Calu3 (cell line): ENCODE measurements at regions of chr14 and their contacts with region 1.

Region 1: DNA sequence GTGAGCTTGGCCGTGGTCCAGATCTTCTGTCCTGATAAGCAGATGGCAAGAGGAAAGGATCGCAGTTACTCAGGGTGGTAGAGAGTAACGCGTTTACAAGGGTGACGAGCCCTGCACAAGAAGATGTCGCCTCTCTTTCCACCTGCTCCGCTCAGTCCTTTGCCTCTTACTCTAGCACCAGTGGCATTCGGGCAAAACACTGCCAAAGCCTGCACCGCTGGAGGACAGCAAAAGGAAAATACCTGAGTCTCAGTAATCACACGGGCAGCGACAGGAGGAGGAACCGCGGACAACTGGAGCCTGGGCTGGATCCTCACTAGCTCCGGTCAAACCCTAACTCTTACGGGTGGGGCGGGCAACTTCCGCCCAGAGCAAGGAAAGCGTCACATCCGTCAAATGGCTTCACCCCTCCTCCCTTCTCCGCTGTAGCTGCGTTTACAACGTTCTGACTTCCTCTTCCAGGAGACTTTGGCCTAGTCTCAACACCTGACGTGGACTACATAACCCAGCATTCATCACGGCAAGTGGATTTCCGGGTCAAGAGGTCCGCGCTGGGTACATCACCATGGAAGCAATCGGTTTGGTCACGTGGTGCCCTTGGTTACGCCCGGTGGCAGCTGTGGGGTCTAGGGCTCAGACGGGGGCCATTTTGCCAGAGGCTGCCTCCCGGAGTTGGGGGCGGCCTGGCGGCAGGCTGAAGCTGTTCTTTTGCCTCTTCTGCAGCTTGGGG is at the starts of genes KLHL28 and TOGARAM1:
- DNase-seq: peak; percentile 95
- H3K4me3 Mint-ChIP-seq: no peak within 1 kb of the TSS
- H3K27ac Mint-ChIP-seq: no peak within 1 kb of the TSS
- H3K4me1 Mint-ChIP-seq: peaks cover 16% of the 10 kb centered on the region
- H3K27me3 Mint-ChIP-seq: no peaks in the 10 kb centered on the region
- CTCF ChIP-seq: no peak
- total RNA-seq, gene KLHL28: 10.1 and 10.7 TPM in 2 replicates
- total RNA-seq, gene TOGARAM1: 15.1 TPM in 2 replicates

Region 2: GRCh38 chr14:44609876-44610510 is 351.8 kb before region 1 on chr14:
- CTCF ChIA-PET with region 1: no interaction called
- intact Hi-C with region 1: no loop called
- DNase-seq: no peak
- H3K4me3 Mint-ChIP-seq: no peak overlapping the region
- H3K27ac Mint-ChIP-seq: no peak overlapping the region
- H3K4me1 Mint-ChIP-seq: no peaks in the 10 kb centered on the region
- H3K27me3 Mint-ChIP-seq: peaks cover 14% of the 10 kb centered on the region
- CTCF ChIP-seq: no peak

Region 3: DNA sequence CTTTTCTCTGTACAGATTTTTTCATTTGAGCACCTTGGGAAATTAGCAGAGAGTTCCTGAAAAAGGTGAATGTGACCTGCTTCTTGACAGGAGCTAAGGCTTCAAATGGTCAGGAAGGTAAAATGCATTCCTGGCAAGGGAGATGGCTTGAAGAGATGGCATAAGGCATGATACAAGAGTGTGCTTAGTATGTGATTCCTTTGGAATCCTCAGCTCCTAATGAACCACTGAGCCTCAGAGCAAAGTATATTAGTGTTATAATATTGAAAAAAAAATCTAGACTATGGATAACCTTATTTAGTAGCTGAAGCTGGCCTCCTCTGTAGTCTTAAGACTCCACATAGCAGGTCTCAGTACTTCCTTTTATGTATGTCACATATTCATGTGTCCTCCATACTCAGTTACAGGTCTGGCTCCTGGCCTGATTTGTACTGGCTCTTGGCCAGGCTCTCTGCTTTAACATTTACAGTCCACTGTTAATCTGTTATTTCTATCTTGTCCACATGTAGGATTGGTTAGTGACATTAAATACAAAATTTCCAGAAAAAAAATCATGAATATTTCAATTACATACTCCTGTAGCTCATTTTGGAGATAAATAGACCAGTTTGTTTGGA is 18.1 kb after region 1 on chr14:
- CTCF ChIA-PET with region 1: no interaction called
- intact Hi-C with region 1: no loop called
- DNase-seq: no peak
- H3K4me3 Mint-ChIP-seq: no peak overlapping the region
- H3K27ac Mint-ChIP-seq: no peak overlapping the region
- H3K4me1 Mint-ChIP-seq: no peaks in the 10 kb centered on the region
- H3K27me3 Mint-ChIP-seq: no peaks in the 10 kb centered on the region
- CTCF ChIP-seq: no peak

Region 4: GRCh38 chr14:45003924-45004323 is 42.2 kb after region 1 on chr14:
- CTCF ChIA-PET with region 1: no interaction called
- intact Hi-C with region 1: no loop called
- DNase-seq: no peak
- H3K4me3 Mint-ChIP-seq: no peak overlapping the region
- H3K27ac Mint-ChIP-seq: no peak overlapping the region
- H3K4me1 Mint-ChIP-seq: no peaks in the 10 kb centered on the region
- H3K27me3 Mint-ChIP-seq: no peaks in the 10 kb centered on the region
- CTCF ChIP-seq: no peak

Region 5: DNA sequence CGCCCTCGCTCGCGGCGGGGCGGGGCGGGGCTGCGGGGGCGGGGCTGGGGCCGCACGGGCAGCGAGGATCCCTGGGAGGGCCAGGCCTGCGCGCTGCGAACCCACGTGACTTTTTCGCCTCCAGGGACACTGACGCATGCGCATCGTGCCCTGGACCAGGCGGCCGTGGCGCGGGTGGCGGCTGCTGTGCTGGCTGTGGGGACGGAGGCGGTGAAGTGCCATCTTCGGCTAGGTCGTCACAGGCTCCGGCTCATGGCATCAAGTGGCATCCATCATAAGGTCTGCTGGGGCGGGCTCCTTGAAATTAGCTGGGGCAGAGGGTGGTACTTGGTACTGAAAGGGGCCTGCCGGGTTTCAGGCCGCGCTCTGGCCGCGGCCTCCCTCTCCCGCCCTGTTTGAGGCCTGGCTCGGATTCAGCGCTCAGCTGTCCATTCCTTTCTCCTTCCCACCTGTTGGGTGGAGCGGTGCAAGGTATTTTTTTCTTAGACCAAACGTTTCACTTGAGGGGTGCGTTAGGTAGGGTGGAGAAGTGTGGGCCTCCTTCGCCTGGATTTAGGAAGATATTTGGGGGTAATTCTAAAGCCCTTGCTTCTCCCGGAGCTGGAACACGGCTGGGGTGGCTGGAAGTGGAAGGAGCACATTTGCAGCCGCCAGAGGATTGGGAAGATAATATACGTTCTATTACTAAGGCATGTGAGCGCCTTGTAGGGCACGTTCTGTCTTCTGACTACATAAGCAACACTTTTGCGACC is 122.4 kb after region 1 on chr14 and contains the start of gene PRPF39:
- CTCF ChIA-PET with region 1: no interaction called
- intact Hi-C with region 1: loop called (anchors 2 kb)
- DNase-seq: peak; percentile 96
- H3K4me3 Mint-ChIP-seq: peak within 1 kb of the TSS; percentile 96
- H3K27ac Mint-ChIP-seq: peak within 1 kb of the TSS; percentile 87
- H3K4me1 Mint-ChIP-seq: peaks cover 34% of the 10 kb centered on the region
- H3K27me3 Mint-ChIP-seq: no peaks in the 10 kb centered on the region
- CTCF ChIP-seq: no peak
- total RNA-seq, gene PRPF39: 34.2 and 35.8 TPM in 2 replicates

Region 6: DNA sequence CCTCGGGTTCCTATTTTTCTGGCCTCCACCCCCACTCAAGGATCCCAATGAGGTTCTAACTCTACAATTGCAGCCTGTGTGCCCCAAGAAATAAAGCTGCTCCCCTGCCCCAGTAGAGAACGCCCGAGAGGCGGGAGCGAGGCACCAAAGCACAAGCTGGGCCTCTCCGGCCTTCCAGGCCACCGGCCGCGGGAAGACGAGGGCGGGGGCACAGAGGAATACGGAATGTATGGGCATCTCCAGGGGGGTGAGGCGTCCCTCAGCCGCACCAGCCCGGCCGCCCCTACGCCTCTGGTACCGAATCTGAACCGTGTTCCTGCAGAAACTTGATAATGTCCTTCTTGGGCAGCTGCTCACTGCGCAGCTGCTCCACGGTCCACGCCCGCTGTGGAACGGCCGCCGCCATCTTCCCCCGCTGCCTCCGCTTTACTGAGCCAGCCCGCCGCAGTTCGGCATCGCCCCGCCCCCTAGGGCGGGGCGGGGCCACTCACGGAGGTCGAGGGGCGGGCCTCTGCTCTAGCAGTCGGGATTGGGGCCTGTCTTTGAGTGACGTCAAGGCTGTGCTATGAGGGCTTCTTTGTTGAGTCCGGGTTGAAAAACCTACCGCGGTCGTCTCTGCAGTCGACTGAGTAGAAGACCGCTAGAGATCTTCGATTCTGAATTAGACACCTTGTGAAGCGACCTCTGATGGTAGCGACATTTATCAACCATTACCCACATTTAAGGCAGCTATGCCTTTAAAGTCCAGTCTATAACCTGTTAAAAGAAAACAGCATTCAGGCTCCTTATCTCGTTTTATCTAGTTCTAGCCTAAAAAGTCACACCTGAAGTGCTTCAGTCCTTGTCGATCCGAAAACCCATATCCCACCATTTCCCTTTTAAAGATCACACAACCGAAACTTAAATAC is 172.5 kb after region 1 on chr14 and contains the start of gene FKBP3:
- CTCF ChIA-PET with region 1: no interaction called
- intact Hi-C with region 1: loop called (anchors 2 kb)
- DNase-seq: peak; percentile 92
- H3K4me3 Mint-ChIP-seq: peak within 1 kb of the TSS; percentile 96
- H3K27ac Mint-ChIP-seq: peak within 1 kb of the TSS; percentile 93
- H3K4me1 Mint-ChIP-seq: peaks cover 16% of the 10 kb centered on the region
- H3K27me3 Mint-ChIP-seq: no peaks in the 10 kb centered on the region
- CTCF ChIP-seq: no peak
- total RNA-seq, gene FKBP3: 68.9 and 72.8 TPM in 2 replicates